Left lung (tissue), 14 donors: ENCODE measurements at regions of chr15 and their contacts with region 1.

Region 1: DNA sequence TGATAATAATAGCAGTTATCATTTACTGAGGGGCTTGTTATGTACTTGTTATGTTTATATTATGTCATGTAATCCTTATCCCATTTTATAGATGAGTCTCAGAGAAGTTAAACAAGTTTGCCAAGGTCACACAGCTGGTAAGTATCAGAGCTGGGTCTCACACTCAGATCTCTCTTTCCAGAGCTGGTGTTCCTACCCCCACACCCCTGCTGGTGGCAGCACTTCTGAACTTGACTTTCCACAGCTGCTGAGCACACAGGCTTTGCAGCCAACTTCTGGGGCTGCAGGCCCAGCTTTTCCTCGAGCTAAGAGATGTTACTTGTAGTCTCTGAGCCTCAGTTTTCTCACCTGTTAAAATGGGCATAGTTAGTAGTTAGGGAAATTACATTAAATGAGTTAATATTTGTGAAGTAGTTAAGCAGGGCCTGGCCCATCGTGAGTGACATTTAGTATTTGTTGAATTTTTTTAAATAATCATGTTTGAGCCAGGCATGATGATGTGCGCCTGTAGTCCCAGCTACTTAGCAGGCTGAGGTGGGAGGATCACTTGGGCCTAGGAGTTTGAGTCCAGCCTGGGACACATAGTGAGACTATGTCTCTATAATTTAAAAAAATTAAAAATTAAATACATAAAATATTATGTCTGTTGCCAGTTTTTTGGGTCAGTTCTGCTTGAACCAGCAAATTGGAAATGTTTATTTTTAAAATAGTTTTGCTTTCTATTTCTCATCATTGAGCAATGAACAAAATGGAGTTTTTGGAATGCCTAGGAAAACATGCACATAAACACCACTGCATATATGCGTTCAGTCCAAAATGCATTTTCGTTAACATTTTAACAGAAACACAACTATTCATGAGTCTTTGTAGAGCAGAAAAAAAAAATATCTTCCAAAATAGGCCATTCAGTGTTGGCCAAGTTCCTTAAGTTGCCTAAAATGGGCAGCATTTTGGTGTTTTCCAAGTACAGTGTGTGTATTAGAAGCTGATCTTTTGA is 87.3 kb downstream of the SMAD6 start:
- DNase-seq: peak in 2 of 4 donors; percentile 66 to 80
- ATAC-seq: peak; percentile 88
- H3K4me3 ChIP-seq: no peak overlapping the region
- H3K27ac ChIP-seq: peak overlapping the region in 1 of 2 donors; percentile 26
- H3K4me1 ChIP-seq: no peaks in the 10 kb centered on the region
- H3K27me3 ChIP-seq: no peaks in the 10 kb centered on the region
- CTCF ChIP-seq: peak; percentile 43 to 47

Region 2: GRCh38 chr15:66841953-66842681 is 52.8 kb after region 1 on chr15:
- intact Hi-C with region 1: loop called in 1 of 2 experiments (anchors 10 kb)
- DNase-seq: peak; percentile 75 to 97 (median 90)
- ATAC-seq: peak; percentile 91
- H3K4me3 ChIP-seq: peak overlapping the region; percentile 29 to 42
- H3K27ac ChIP-seq: peak overlapping the region; percentile 91 to 95
- H3K4me1 ChIP-seq: peaks cover 12 to 42% of the 10 kb centered on the region in 2 donors
- H3K27me3 ChIP-seq: no peaks in the 10 kb centered on the region
- CTCF ChIP-seq: no peak

Region 3: GRCh38 chr15:66907826-66908743 is 118.8 kb after region 1 on chr15:
- intact Hi-C with region 1: no loop called
- DNase-seq: peak in 2 of 4 donors; percentile 35 to 74
- ATAC-seq: peak; percentile 67
- H3K4me3 ChIP-seq: no peak overlapping the region
- H3K27ac ChIP-seq: no peak overlapping the region
- H3K4me1 ChIP-seq: peaks cover 0 to 8% of the 10 kb centered on the region in 2 donors
- H3K27me3 ChIP-seq: no peaks in the 10 kb centered on the region
- CTCF ChIP-seq: no peak

Region 4: GRCh38 chr15:66948294-66948693 is 159.0 kb after region 1 on chr15:
- intact Hi-C with region 1: no loop called
- DNase-seq: no peak
- ATAC-seq: peak; percentile 29
- H3K4me3 ChIP-seq: no peak overlapping the region
- H3K27ac ChIP-seq: no peak overlapping the region
- H3K4me1 ChIP-seq: no peaks in the 10 kb centered on the region
- H3K27me3 ChIP-seq: peaks cover 0 to 6% of the 10 kb centered on the region in 2 donors
- CTCF ChIP-seq: no peak